Common myeloid progenitor, CD34-positive (primary cell): ENCODE measurements at regions of chr1 and their contacts with region 1.

Region 1: DNA sequence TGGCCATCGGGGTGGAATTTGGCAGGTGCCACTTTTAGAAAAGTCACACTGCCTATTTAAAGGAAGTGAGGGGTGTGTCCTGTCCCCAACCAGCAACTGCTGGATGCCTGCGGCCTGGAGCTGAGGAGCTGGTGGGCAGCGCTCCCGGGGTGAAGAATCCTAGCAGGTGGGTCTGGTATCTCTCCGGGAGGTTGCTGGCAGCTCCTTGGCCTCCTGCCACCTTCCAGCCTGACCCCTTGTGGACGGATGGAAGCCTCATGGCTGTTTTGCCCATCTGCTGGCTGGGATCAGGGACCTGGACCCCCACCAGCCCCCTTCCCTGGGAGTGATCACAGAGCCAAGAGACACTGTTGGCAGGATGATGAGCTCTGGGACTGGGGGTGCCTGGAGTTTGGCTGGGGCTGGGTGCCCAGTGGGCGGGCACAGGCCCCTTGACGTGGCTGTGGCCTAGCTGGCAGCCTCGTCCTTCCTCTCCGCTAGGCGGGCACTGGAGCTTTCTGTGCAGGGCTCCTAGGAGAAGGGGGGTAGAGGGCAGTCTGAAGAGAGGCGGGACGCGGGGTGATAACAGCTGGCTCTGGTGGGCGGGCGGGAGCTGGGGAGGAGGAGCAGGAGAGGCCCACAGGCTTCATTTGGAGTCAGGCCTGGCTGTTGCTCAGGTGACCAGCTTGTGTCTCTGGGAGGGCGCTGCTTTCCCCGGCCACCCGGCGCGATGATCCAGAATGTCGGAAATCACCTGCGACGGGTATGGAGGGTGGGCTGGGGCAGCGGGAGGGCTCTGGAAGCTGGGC is at the start of gene ACOT11:
- DNase-seq: peak; percentile 87 to 93 (median 90)
- H3K4me3 ChIP-seq: peak within 1 kb of the TSS in 5 of 7 experiments; percentile 17 to 62 (median 36)
- H3K27ac ChIP-seq: peak within 1 kb of the TSS; percentile 42 to 69
- H3K4me1 ChIP-seq: peaks cover 0 to 62% (median 37%) of the 10 kb centered on the region in 4 experiments
- H3K27me3 ChIP-seq: no peaks in the 10 kb centered on the region

Region 2: GRCh38 chr1:54347955-54348699 is 199.7 kb before region 1 on chr1:
- CTCF ChIA-PET with region 1: no interaction called
- POLR2A ChIA-PET with region 1: no interaction called
- DNase-seq: no peak
- H3K4me3 ChIP-seq: no peak overlapping the region
- H3K27ac ChIP-seq: no peak overlapping the region
- H3K4me1 ChIP-seq: peaks cover 3 to 22% (median 14%) of the 10 kb centered on the region in 4 experiments
- H3K27me3 ChIP-seq: no peaks in the 10 kb centered on the region

Region 3: GRCh38 chr1:54499360-54500106 is 48.3 kb before region 1 on chr1:
- CTCF ChIA-PET with region 1: interaction called, 12 read pairs
- POLR2A ChIA-PET with region 1: no interaction called
- DNase-seq: peak in 2 of 3 donors; percentile 79 to 83
- H3K4me3 ChIP-seq: peak overlapping the region; percentile 12 to 76 (median 48)
- H3K27ac ChIP-seq: no peak overlapping the region
- H3K4me1 ChIP-seq: peaks cover 0 to 24% (median 19%) of the 10 kb centered on the region in 4 experiments
- H3K27me3 ChIP-seq: no peaks in the 10 kb centered on the region

Region 4: GRCh38 chr1:54519709-54520108 is 28.1 kb before region 1 on chr1:
- CTCF ChIA-PET with region 1: no interaction called
- POLR2A ChIA-PET with region 1: no interaction called
- DNase-seq: peak in 2 of 3 donors; percentile 30 to 31
- H3K4me3 ChIP-seq: no peak overlapping the region
- H3K27ac ChIP-seq: no peak overlapping the region
- H3K4me1 ChIP-seq: no peaks in the 10 kb centered on the region
- H3K27me3 ChIP-seq: no peaks in the 10 kb centered on the region

Region 5: DNA sequence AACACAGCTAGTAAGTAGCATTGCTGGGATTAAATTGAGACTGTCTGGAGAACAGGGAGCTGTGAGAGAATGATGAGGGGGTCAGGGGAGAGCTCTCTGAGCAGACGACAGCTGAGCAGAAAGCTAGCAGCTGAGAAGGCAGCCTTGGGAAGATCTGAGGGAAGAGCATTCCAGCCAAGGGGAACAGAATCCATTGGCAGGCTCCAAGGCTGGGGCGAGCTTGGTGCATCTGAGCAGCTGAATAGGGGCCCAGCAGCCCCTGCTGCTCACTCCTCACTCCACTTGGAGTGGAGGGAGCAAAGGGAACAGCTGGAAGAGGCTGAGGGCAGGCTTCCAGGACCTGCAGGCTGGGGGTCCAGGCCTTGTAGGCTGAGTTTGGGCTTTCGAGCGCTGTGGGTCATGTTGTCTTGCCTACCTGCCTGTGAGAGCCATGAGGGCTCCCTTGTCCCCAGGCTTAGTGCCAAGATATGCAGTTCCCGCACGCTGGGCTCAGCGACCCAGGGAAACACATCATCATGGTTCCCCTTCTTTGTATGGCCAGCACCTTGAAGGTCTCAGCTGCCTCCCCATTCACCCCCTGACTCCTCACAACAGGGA is 10.7 kb after region 1 on chr1:
- CTCF ChIA-PET with region 1: interaction called, 21 read pairs
- POLR2A ChIA-PET with region 1: interaction called, 3 read pairs
- DNase-seq: peak in 1 of 3 donors; percentile 34
- H3K4me3 ChIP-seq: peak overlapping the region in 1 of 7 experiments; percentile 22
- H3K27ac ChIP-seq: no peak overlapping the region
- H3K4me1 ChIP-seq: peaks cover 6 to 28% (median 20%) of the 10 kb centered on the region in 4 experiments
- H3K27me3 ChIP-seq: no peaks in the 10 kb centered on the region